Posterior vena cava (tissue), 2 donors: ENCODE measurements at regions of chr14 and their contacts with region 1.

Region 1: DNA sequence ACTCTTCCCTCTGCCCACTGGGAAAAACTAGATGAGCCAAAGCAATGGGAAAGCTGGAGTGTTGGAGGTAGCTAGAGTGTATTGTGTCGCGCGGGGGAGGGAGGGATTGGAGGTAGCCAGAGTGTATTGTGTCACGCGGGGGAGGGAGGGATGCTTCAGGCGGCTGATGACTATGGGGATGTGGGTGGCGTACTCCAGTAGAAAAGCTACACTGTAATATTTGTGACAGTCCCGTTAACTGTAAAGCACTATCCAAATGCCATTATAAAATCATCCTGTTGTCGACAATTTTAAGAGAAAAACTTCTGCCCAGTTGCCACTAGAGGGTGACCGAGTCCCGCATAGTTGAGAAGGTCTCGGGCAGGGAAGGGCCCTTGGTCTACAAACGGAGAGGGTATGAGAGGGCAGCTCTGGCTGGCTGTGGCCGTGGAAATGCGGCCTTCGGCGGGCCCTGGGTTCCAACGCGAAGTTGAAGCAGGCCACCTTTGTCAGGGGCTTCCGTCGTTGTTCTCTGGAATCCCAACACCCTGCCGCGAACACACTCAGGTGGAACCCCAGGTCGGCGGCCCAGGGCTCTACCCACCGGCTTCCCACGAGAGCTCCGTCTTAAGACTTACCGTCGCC is 15.1 kb upstream of the PLEK2 start:
- DNase-seq: peak; percentile 84

Region 2: GRCh38 chr14:68843471-68844209 is 1416.5 kb after region 1 on chr14:
- intact Hi-C with region 1: loop called in 1 of 2 experiments (anchors 5 kb)
- DNase-seq: peak; percentile 95